ENCODE measurements at regions of chr12 and their contacts with region 1.

Region 1: DNA sequence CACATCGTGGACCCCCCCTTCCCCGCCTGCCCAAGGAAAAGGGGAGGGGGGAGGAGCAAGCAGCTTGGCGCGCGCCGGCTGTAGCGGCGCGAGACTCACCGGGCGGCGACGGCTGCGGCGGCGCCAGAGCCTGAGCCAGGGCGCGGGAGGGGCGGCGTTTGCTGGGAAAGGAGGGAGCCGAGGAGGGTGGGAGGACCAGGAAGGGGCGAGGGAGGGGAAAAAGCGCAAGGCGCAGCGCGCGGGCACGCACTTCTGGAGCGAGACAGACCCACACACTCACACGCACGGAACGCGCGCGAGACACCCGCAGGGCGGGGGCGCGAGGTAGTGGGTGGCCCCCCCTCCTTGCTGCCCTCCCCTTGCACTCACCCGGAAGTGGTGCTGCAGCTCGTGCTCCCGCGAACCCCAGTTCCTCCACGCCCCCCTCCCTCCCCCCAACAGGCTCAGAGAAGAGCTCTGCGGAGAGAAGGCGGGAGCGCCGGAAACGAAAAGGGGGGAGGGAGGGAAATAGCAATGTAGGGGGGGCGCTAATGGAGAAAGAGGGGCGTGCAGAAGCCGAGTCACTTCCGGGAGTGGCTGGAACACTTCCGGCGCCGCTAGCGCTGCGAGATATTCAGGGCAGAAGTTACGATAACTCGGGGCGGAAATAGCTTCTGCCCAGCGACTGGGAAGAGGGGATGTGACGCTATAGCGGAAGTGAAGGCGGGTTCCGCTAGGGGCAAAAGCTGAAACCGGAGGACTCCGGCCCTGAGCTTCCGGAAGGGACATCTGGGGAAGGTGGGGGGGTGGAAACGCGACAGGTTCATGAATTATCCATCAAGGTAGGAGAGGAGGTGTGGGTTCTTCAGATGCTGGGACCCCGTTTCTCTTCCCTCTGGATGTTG is at the start of gene ZNF384:
- DNase-seq: peak; percentile 99
- ATAC-seq: peak; percentile 88
- H3K4me3 ChIP-seq: peak within 1 kb of the TSS; percentile 88 to 99 (median 89)
- H3K27ac ChIP-seq: peak within 1 kb of the TSS; percentile 98
- H3K4me1 ChIP-seq: peaks cover 51% of the 10 kb centered on the region
- H3K27me3 ChIP-seq: peaks cover 0 to 3% of the 10 kb centered on the region in 2 experiments; a peak in 3 of 5 replicates
- CTCF ChIP-seq: peak; percentile 31
- EP300 ChIP-seq: peak in 1 of 2 experiments; percentile 46; a peak in 2 of 4 replicates
- POLR2A ChIP-seq: peak; percentile 57 to 76
- RAD21 ChIP-seq: no peak
- total RNA-seq, gene ZNF384: 23.6 and 24.1 TPM in 2 replicates

Region 2: DNA sequence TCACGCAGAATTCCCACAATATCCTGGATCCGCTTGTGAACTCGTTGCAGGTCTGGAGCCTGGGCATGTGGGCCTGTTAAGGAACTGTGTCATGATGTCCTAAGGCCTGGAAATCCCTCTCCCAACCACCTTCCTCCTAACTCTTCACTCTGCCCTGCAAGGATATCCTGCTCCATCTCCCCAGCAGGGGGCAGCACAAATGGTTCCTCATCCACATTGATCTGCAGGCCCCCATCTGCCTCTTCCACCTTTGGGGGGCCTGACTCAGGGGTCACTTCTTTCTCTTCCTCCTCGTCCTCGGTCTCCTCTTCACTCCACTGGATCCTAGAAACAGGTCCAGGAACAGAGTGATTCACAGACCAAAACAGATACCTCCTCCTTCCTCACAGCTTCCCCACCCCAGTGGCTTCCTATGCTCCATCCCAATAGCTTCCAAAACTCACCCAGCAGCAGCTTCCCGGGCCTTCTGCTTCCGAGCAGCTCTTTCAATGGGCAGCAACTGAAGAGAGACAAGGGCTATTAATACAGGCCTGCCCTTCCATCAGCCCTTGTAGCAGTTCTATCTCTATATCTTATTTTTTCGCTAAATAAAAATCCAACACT is 125.7 kb before region 1 on chr12:
- CTCF ChIA-PET with region 1: no interaction called
- POLR2A ChIA-PET with region 1: interaction called, 17 read pairs
- in situ Hi-C with region 1: no loop called
- intact Hi-C with region 1: loop called (anchors 5 kb)
- DNase-seq: peak; percentile 54
- ATAC-seq: peak; percentile 59
- H3K4me3 ChIP-seq: no peak overlapping the region
- H3K27ac ChIP-seq: no peak overlapping the region
- H3K4me1 ChIP-seq: peaks cover 14% of the 10 kb centered on the region
- H3K27me3 ChIP-seq: no peaks in the 10 kb centered on the region
- CTCF ChIP-seq: peak; percentile 74
- EP300 ChIP-seq: no peak
- POLR2A ChIP-seq: no peak
- RAD21 ChIP-seq: peak; percentile 41; the same call in 1 of the 2 replicates

Region 3: DNA sequence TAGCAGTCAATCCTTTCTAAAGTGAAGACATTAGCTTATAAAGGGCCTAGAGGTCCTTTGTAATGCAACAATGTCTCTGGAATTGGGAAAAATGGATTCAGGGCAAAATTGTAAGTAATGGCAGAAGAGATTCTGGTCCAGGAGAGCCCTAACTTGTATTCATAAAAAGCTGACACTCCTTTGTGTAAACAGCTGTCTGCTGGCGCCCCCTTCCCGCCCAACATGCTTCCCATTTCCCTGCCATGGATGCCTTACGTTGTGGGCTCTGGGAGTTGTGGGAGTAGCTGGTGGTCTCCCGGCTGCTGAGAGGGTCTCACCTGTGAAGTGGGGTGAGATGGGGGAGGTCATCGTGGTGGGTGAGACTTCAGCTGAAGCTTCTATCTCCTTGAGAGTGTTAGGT is 44.3 kb before region 1 on chr12:
- CTCF ChIA-PET with region 1: no interaction called
- POLR2A ChIA-PET with region 1: interaction called, 13 read pairs
- in situ Hi-C with region 1: no loop called
- intact Hi-C with region 1: no loop called
- DNase-seq: no peak
- ATAC-seq: peak; percentile 59
- H3K4me3 ChIP-seq: no peak overlapping the region; a peak in 1 of 6 replicates
- H3K27ac ChIP-seq: no peak overlapping the region
- H3K4me1 ChIP-seq: peaks cover 21% of the 10 kb centered on the region
- H3K27me3 ChIP-seq: peaks cover 0 to 12% of the 10 kb centered on the region in 2 experiments; a peak in 3 of 5 replicates
- CTCF ChIP-seq: peak; percentile 62
- EP300 ChIP-seq: no peak
- POLR2A ChIP-seq: no peak
- RAD21 ChIP-seq: no peak

Region 4: GRCh38 chr12:6716874-6717437 is 27.7 kb after region 1 on chr12:
- CTCF ChIA-PET with region 1: no interaction called
- POLR2A ChIA-PET with region 1: interaction called, 12 read pairs
- in situ Hi-C with region 1: no loop called
- intact Hi-C with region 1: no loop called
- DNase-seq: no peak
- ATAC-seq: peak; percentile 26; the same call in 1 of the 3 replicates
- H3K4me3 ChIP-seq: no peak overlapping the region
- H3K27ac ChIP-seq: no peak overlapping the region
- H3K4me1 ChIP-seq: peaks cover 13% of the 10 kb centered on the region
- H3K27me3 ChIP-seq: no peaks in the 10 kb centered on the region
- CTCF ChIP-seq: no peak
- EP300 ChIP-seq: no peak
- POLR2A ChIP-seq: peak; percentile 53 to 75; a peak in 2 of 4 replicates
- RAD21 ChIP-seq: no peak

Region 5: DNA sequence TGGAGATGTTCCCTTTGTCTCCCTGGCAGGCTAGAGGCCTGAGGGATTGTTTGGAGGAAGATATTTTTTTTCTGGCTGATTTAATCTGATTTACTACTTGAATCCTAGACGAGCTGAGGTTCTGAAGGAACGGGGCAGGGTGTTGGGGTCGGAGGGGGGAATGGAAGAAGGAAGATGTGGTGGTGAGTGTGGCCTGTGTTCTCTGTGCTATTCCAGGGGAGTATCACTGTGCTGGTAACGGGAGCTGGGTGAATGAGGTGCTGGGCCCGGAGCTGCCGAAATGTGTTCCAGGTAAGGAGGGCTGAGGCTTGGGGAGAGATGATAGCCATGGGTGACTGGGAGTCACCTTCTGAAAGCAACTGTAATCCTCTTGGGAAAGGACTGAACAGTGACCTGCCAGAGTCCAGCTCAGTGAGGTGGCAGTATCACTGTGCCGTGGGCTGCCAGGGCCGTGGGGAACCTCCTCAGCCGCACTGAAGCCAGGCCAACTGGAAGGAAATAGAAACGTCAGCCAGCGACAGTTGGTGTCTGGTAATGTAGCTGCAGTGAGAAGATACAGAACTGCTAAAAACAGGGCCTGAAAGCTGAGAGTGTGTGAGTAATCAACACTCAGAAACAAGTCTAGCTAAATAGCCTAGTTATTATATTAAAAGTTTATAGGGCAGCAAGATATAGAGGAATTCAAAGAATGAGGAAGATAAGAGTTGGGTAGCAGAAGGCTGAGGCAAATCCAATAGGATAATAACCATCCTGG is 379.2 kb after region 1 on chr12:
- CTCF ChIA-PET with region 1: no interaction called
- POLR2A ChIA-PET with region 1: no interaction called
- in situ Hi-C with region 1: no loop called
- intact Hi-C with region 1: no loop called
- DNase-seq: no peak
- ATAC-seq: no peak
- H3K4me3 ChIP-seq: no peak overlapping the region
- H3K27ac ChIP-seq: no peak overlapping the region
- H3K4me1 ChIP-seq: peaks cover 18% of the 10 kb centered on the region
- H3K27me3 ChIP-seq: no peaks in the 10 kb centered on the region
- CTCF ChIP-seq: no peak
- EP300 ChIP-seq: no peak
- POLR2A ChIP-seq: no peak
- RAD21 ChIP-seq: no peak

Measured in HepG2 (cell line).